ENCODE measurements at regions of chr2 and their contacts with region 1.

Region 1: GRCh38 chr2:197137231-197137630 is 173.3 kb downstream of the ANKRD44 start:
- DNase-seq: peak; percentile 68
- ATAC-seq: peak; percentile 92
- H3K4me3 ChIP-seq: peak overlapping the region; percentile 12; the same call in 1 of the 2 replicates
- H3K27ac ChIP-seq: peak overlapping the region; percentile 22
- H3K4me1 ChIP-seq: peaks cover 21% of the 10 kb centered on the region
- H3K27me3 ChIP-seq: no peaks in the 10 kb centered on the region
- CTCF ChIP-seq: peak; percentile 38; the same call in 1 of the 2 replicates

Region 2: DNA sequence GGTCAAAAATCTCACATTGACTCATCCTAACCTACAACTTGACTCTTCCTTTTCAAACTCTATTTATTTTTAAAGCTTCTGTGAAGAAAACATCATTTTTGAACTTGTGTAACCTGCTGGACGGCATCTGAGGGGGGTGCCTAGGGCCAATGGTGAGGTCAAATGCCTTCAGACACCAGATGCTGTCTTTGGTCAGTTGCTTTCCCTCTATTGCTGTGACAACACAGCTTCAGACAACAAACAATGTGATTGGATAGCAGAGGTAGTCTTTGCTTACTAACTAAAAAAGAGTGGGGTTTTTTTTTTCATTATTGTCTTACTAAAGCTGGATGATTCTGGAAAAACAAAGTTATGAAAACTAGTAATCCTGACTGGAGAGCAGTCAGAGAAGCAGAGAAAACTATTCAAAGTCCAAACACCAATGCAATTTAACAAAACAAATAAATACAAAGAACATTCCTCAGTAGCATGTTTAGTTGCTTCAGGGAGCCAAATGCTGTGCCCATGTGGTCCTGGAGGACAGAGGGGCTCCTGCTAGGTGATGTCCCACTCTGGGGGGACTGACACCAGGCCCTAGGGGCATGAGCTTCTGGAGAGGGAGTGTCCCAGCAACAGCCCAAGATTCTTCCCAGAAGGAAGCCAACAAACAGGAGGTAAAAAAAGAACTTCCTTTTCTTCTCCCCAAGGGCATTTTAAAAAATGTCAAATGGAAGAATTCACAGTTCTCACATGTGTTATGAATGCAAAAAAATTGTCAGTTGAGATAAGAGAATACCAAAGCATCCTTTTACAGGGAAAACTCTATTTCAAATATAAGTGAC is 29.8 kb before region 1 on chr2:
- CTCF ChIA-PET with region 1: no interaction called
- POLR2A ChIA-PET with region 1: no interaction called
- intact Hi-C with region 1: no loop called
- DNase-seq: peak; percentile 15
- ATAC-seq: no peak; the same call in 1 of the 2 replicates
- H3K4me3 ChIP-seq: no peak overlapping the region
- H3K27ac ChIP-seq: no peak overlapping the region
- H3K4me1 ChIP-seq: peaks cover 14% of the 10 kb centered on the region; the same call in 1 of the 2 replicates
- H3K27me3 ChIP-seq: no peaks in the 10 kb centered on the region
- CTCF ChIP-seq: no peak

Region 3: GRCh38 chr2:197159661-197160211 is 22.5 kb after region 1 on chr2:
- CTCF ChIA-PET with region 1: interaction called, 12 read pairs
- POLR2A ChIA-PET with region 1: no interaction called
- intact Hi-C with region 1: loop called (anchors 1 kb)
- DNase-seq: peak; percentile 92
- ATAC-seq: peak; percentile 89
- H3K4me3 ChIP-seq: peak overlapping the region; percentile 51
- H3K27ac ChIP-seq: peak overlapping the region; percentile 93
- H3K4me1 ChIP-seq: peaks cover 36% of the 10 kb centered on the region
- H3K27me3 ChIP-seq: no peaks in the 10 kb centered on the region
- CTCF ChIP-seq: no peak

Region 4: DNA sequence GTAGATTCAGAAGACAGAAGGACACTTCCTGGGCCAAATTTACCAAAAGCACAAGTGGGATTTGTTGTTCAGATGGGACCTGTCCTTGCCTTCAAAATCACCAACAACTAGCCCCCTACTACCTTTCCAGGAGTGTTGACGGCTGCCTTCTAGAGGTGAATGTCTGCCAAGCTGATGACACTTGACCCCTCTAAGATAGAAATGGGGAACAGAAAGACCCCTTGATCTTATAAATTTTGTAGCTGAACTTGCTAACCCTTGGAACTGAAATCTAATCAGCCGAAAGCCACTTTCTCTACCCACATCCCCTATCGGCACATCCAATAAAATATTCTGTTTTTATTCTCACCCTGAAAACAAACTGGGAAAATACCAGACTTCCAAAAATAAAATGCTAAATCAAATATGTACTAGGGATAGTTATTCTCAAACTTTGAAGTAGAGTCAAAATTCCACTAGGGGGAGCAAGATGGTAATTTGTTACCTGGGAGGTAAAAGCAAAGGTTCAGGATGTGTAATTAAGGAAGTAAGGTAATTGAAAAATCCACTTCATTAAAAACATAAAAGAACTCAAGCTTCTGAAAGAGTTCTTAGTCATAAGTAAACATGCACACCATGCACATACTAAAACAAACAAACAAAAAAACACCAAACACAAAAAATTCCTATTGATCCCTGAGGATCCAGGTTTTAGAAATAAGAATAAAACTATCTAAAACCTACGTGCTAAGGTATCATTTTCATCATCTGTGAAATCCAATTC is 54.1 kb after region 1 on chr2:
- CTCF ChIA-PET with region 1: no interaction called
- POLR2A ChIA-PET with region 1: no interaction called
- intact Hi-C with region 1: loop called (anchors 2 kb)
- DNase-seq: peak; percentile 76
- ATAC-seq: peak; percentile 37
- H3K4me3 ChIP-seq: no peak overlapping the region
- H3K27ac ChIP-seq: no peak overlapping the region
- H3K4me1 ChIP-seq: no peaks in the 10 kb centered on the region
- H3K27me3 ChIP-seq: no peaks in the 10 kb centered on the region
- CTCF ChIP-seq: peak; percentile 88

Region 5: GRCh38 chr2:197229509-197230443 is 92.5 kb after region 1 on chr2:
- CTCF ChIA-PET with region 1: no interaction called
- POLR2A ChIA-PET with region 1: no interaction called
- intact Hi-C with region 1: loop called (anchors 1 kb)
- DNase-seq: peak; percentile 63
- ATAC-seq: peak; percentile 96
- H3K4me3 ChIP-seq: no peak overlapping the region
- H3K27ac ChIP-seq: no peak overlapping the region
- H3K4me1 ChIP-seq: peaks cover 13% of the 10 kb centered on the region
- H3K27me3 ChIP-seq: no peaks in the 10 kb centered on the region
- CTCF ChIP-seq: no peak

Region 6: DNA sequence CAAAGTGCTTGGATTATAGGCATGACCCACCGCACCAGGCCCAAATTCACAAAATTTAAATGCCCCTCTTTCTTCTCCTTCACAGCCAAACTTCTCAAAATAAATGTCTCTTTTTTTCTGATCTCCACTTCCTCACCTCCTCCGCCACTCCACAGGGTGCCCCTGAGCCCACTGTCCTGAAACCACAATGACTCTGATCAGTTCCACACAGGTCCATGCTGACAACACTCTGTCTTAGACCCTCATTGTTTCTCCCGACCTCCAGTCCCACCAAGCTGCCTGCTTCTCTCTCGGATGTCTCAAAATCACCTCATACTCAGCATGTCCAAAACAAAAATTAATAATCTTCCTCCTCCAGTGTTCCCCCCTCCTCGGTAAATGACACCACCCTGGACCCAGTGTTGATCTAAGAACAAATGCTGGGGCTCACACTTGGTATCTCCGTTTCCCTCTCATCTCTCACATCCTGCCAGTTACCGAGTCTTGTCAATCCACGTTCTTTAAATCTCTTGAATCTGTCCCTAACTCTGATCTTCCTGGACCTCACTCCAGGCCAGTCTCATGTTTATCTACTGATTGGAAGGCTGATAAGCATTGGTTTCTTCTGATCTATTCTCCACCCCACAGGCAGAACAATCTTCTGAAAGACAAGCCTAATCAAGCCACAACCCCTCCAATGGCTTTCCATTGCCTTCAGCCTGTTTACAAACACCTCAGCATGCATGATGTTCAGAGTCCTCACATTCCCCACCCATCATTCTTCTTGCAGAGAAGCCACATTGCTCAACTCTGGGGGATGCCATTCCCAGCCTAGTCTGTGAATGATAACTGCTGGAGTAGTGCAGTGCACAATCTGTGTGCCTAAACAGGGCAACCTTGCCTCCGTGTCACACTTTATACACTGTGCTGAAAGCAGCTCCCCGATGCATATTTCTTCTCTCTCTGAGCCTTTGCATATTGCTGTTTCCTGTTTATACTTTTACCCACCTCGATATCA is 185.8 kb after region 1 on chr2:
- CTCF ChIA-PET with region 1: no interaction called
- POLR2A ChIA-PET with region 1: no interaction called
- intact Hi-C with region 1: no loop called
- DNase-seq: no peak
- ATAC-seq: no peak
- H3K4me3 ChIP-seq: no peak overlapping the region
- H3K27ac ChIP-seq: no peak overlapping the region
- H3K4me1 ChIP-seq: no peaks in the 10 kb centered on the region
- H3K27me3 ChIP-seq: peaks cover 7% of the 10 kb centered on the region; the same call in 1 of the 2 replicates
- CTCF ChIP-seq: no peak